ENCODE measurements at regions of chr14 and their contacts with region 1.

Region 1: DNA sequence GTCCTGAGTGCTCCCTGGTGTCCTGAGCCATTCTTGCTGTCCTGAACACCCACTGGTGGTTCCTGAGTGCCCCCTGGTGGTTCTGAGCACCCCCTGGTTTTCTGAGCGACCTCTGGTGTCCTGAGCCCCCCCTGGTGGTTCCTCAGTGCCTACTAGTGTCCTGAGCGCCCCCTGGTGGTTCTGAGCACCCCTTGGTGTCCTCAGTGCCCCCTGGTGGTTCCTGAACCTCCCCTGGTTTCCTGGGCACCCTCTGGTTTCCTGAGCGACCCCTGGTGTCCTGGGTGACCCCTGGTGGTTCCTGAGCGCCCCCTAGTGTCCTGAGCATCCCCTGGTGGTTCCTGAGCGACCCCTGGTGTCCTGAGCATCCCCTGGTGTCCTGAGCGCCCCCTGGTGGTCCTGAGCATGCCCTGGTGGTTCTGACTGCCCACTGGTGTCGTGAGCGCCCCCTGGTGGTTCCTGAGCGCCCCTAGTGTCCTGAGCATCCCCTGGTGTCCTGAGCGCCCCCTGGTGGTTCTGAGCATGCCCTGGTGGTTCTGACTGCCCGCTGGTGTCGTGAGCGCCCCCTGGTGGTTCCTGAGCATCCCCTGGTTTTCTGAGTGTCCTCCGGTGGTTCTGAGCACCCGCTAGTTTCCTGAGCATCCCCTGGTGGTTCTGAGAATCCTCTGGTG is 473.1 kb downstream of the TMEM121 start:
- DNase-seq: peak; percentile 90
- H3K4me3 Mint-ChIP-seq: no peak overlapping the region
- H3K27ac Mint-ChIP-seq: peak overlapping the region; percentile 80
- H3K4me1 Mint-ChIP-seq: peaks cover 51% of the 10 kb centered on the region
- H3K27me3 Mint-ChIP-seq: no peaks in the 10 kb centered on the region

Region 2: DNA sequence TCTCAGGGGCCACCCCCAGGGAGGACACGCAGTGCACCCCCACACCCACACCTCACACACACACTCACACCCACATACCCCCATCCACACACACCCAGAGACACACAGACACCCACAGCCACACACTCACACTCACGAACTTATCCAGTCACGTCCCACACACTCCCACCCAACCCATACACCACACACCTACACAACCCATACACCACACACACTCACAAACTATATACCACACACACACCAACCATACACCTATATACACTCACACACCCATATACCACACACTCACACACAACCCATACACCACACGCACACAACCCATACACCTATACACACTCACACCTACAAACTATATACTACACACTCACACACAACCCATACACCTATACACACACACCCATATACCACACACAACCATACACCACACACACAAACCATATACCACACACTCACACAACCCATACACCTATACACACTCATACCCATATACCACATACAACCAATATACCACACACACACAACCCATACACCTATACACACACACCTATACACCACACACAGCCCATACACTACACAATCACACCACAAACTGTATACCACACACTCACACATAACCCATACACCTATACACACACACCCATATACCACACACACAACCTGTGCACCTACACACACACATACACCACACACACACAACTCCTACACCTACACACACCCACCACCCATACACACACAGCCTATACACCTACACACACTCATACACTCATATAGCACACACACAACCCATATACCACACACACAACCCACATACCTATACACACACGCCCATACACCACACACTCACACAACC is 430.4 kb before region 1 on chr14:
- CTCF ChIA-PET with region 1: no interaction called
- POLR2A ChIA-PET with region 1: no interaction called
- DNase-seq: no peak
- H3K4me3 Mint-ChIP-seq: no peak overlapping the region
- H3K27ac Mint-ChIP-seq: no peak overlapping the region
- H3K4me1 Mint-ChIP-seq: no peaks in the 10 kb centered on the region
- H3K27me3 Mint-ChIP-seq: no peaks in the 10 kb centered on the region

Region 3: DNA sequence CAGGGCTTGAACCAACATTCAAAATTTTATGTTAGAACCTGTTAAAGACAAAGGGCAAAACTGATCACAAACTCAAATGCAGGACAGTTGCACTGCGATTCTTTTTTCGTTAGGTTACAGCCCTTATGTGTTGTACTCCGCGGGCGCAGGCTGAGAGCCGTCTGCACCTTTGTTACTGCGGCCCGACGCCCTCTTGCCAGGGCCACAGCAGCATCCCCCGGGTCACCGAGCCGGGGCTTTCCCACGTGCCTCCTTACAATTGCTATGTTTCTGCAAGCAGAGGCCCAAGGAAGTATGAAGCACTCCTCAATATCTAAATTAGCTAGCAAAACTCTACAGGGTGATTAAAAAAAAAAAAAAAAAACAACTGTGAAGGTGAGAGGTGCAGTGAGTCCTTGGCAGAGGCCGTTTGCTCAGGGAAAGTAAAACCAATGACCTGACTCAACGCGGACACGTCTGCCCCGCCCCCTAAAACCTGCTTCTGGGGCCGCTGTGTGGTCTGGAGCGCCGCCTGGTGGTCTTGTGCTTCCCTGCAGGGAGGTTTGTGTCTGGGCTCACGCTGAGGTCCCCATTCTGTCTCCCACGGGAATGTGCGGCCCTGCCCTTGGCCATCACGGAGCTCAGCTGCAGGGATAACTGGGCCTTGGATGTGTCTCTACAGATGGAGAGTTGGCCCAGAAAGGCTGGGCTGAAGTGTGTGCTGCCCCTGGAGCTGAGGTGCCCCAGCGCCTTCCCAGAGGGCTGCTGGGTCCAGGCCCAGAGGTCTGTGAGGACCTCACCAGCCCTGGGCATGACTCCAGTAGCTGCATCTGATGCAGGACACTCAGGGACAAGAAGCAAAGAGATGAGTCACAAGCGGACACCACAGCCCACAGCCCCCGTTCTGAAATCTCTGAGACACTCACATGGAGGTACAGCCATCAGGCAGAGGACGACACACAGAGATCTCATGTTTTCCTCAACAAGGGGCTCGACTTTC is 54.6 kb before region 1 on chr14:
- CTCF ChIA-PET with region 1: interaction called, 22 read pairs
- POLR2A ChIA-PET with region 1: no interaction called
- DNase-seq: peak; percentile 80
- H3K4me3 Mint-ChIP-seq: no peak overlapping the region
- H3K27ac Mint-ChIP-seq: peak overlapping the region; percentile 42
- H3K4me1 Mint-ChIP-seq: peaks cover 24% of the 10 kb centered on the region
- H3K27me3 Mint-ChIP-seq: peaks cover 2% of the 10 kb centered on the region

Region 4: DNA sequence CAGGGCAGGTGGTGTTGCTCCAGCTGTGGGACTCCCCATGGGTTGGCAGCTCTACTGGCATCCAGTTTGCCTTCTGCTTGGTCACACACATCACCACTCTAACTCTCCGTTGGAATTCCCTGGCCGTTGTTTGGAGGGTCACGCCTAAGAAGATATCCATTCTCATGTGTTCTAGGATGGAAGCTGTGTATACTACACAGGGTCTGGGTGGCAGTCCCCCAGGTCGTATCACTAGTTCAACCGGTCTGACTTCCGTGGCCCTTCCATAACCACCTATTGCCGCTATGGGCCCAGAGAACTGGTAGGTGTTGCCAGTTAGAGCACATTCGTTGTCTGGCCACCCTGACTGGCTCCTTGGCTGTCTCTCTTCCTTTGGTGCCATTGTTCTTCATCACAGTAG is 16.8 kb before region 1 on chr14:
- CTCF ChIA-PET with region 1: interaction called, 51 read pairs
- POLR2A ChIA-PET with region 1: no interaction called
- DNase-seq: no peak
- H3K4me3 Mint-ChIP-seq: no peak overlapping the region
- H3K27ac Mint-ChIP-seq: no peak overlapping the region
- H3K4me1 Mint-ChIP-seq: peaks cover 52% of the 10 kb centered on the region
- H3K27me3 Mint-ChIP-seq: no peaks in the 10 kb centered on the region

Region 5: DNA sequence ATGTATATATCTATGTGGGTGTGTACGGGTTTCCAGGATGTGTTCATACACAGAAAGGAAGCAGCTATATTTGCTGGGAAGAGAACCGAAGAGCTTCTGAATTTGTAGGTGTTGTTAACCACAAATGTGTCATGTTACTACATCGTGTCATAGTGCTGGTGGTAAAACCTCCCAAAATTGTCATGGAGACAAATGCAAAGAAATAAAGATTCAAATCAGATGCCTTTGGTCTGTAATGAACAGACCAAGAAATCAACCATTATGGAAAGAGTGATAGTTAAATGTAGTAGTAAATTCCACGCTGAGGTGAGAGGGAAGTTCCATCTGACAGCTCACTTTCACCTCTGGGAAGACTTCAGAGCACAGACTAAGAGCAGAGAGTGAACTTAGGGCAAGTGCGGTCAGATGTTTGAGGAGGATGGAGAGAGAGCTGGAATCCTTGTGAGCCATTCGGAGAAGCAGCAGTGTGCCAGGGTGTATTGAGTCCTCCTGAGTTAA is 14.4 kb after region 1 on chr14:
- CTCF ChIA-PET with region 1: interaction called, 59 read pairs
- POLR2A ChIA-PET with region 1: no interaction called
- DNase-seq: no peak
- H3K4me3 Mint-ChIP-seq: no peak overlapping the region
- H3K27ac Mint-ChIP-seq: no peak overlapping the region
- H3K4me1 Mint-ChIP-seq: peaks cover 44% of the 10 kb centered on the region
- H3K27me3 Mint-ChIP-seq: no peaks in the 10 kb centered on the region

Region 6: GRCh38 chr14:106039400-106039799 is 39.9 kb after region 1 on chr14:
- CTCF ChIA-PET with region 1: interaction called, 17 read pairs
- POLR2A ChIA-PET with region 1: no interaction called
- DNase-seq: peak; percentile 65
- H3K4me3 Mint-ChIP-seq: no peak overlapping the region
- H3K27ac Mint-ChIP-seq: no peak overlapping the region
- H3K4me1 Mint-ChIP-seq: no peaks in the 10 kb centered on the region
- H3K27me3 Mint-ChIP-seq: peaks cover 9% of the 10 kb centered on the region

Measured in activated CD4-positive, alpha-beta T cell treated with anti-CD3 and anti-CD28 coated beads, Interleukin-2, amount 10 ng/mL, durations not matched to agents 7 days and 5 days (primary cell).